K562 (cell line): ENCODE measurements at regions of chrX and their contacts with region 1.

Region 1: DNA sequence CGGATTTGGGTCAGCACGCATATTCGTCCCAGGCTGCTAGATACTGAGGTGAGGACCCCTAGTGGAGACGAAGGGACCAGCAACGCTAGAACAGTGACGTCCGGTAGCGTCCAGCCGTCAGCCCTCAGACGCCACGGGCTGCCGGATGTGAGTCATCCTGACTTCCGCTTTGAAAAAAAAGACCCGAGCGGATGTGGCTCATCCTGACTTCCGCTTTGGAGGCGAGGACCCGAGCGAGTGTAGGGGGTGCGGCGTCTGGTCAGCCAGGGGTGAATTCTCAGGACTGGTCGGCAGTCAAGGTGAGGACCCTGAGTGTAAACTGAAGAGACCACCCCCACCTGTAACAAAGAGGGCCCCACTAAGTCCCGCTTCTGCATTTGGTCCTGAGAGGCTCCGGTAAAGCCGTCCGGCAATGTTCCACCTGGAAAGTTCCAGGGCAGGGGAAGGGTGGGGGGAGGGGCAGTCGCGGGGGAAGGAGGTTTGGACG is at the start of gene MAGEB2:
- DNase-seq: peak; percentile 84 to 89 (median 84)
- ATAC-seq: peak; percentile 97
- H3K4me3 ChIP-seq: peak within 1 kb of the TSS; percentile 57
- H3K27ac ChIP-seq: peak within 1 kb of the TSS; percentile 92
- H3K4me1 ChIP-seq: peaks cover 8 to 12% of the 10 kb centered on the region in 2 experiments
- H3K27me3 ChIP-seq: no peaks in the 10 kb centered on the region
- CTCF ChIP-seq: peak; percentile 61 to 81 (median 71)
- EP300 ChIP-seq: no peak
- POLR2A ChIP-seq: peak; percentile 74
- RAD21 ChIP-seq: peak; percentile 28 to 35; a peak in 2 of 4 replicates
- polyA plus RNA-seq, gene MAGEB2: 235 to 277 TPM

Region 2: DNA sequence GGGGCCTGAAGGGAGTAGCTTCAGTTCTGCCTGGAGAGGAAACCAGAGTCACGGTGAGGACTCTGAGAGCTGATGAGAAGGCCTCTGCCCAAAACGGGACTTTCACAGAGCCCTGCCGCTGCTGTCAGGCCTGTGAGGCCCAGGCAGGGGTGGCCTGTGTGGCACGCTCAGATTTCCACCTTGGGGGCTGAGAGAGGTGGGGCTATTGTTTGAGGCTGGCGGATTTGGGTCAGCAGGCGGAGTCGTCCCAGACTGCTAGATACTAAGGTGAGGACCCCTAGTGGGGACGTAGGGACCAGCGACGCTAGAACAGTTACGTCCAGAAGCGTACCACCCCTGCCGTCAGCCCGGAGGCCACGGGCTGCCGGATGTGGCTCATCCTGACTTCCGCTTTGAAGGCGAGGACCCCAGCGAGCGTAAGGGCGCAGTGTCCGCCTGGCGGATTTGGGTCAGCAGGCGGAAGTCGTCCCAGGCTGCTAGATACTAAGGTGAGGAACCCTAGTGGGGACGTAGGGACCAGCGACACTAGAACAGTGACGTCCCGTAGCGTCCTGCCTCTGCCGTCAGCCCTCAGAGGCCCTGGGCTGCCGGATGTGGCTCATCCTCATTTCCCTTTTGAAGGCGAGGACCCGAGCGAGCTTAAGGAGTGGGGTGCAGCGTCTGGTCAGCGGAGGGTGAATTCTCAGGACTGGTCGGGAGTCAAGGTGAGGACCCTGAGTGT is 31.5 kb after region 1 on chrX and contains the start of gene MAGEB1:
- CTCF ChIA-PET with region 1: no interaction called
- POLR2A ChIA-PET with region 1: no interaction called
- in situ Hi-C with region 1: no loop called
- intact Hi-C with region 1: loop called (anchors 2 kb)
- DNase-seq: peak; percentile 68 to 90 (median 71)
- ATAC-seq: peak; percentile 99
- H3K4me3 ChIP-seq: peak within 1 kb of the TSS; percentile 56
- H3K27ac ChIP-seq: peak within 1 kb of the TSS; percentile 92
- H3K4me1 ChIP-seq: peaks cover 7 to 9% of the 10 kb centered on the region in 2 experiments; a peak in 4 of 5 replicates
- H3K27me3 ChIP-seq: no peaks in the 10 kb centered on the region
- CTCF ChIP-seq: peak; percentile 71 to 84 (median 75)
- EP300 ChIP-seq: no peak
- POLR2A ChIP-seq: peak; percentile 75
- RAD21 ChIP-seq: peak in 1 of 2 experiments; percentile 32; a peak in 2 of 4 replicates
- polyA plus RNA-seq, gene MAGEB1: 90.0 to 100 TPM

Region 3: GRCh38 chrX:30283431-30284200 is 68.2 kb after region 1 on chrX:
- CTCF ChIA-PET with region 1: no interaction called
- POLR2A ChIA-PET with region 1: no interaction called
- in situ Hi-C with region 1: no loop called
- intact Hi-C with region 1: loop called (anchors 5 kb)
- DNase-seq: peak; percentile 61 to 72 (median 63)
- ATAC-seq: peak; percentile 98
- H3K4me3 ChIP-seq: no peak overlapping the region
- H3K27ac ChIP-seq: peak overlapping the region; percentile 86
- H3K4me1 ChIP-seq: peaks cover 0 to 20% of the 10 kb centered on the region in 2 experiments; a peak in 2 of 5 replicates
- H3K27me3 ChIP-seq: no peaks in the 10 kb centered on the region
- CTCF ChIP-seq: no peak
- EP300 ChIP-seq: peak; percentile 85
- POLR2A ChIP-seq: no peak
- RAD21 ChIP-seq: no peak

Region 4: GRCh38 chrX:30652527-30653414 is 437.4 kb after region 1 on chrX:
- CTCF ChIA-PET with region 1: no interaction called
- POLR2A ChIA-PET with region 1: no interaction called
- in situ Hi-C with region 1: no loop called
- intact Hi-C with region 1: no loop called
- DNase-seq: peak; percentile 94 to 96 (median 95)
- ATAC-seq: peak; percentile 92
- H3K4me3 ChIP-seq: peak overlapping the region; percentile 68
- H3K27ac ChIP-seq: peak overlapping the region; percentile 95
- H3K4me1 ChIP-seq: peaks cover 20 to 21% of the 10 kb centered on the region in 2 experiments; a peak in 4 of 5 replicates
- H3K27me3 ChIP-seq: no peaks in the 10 kb centered on the region
- CTCF ChIP-seq: no peak
- EP300 ChIP-seq: peak; percentile 12; the same call in 1 of the 2 replicates
- POLR2A ChIP-seq: peak; percentile 78
- RAD21 ChIP-seq: no peak